Calu3 (cell line): ENCODE measurements at regions of chr1 and their contacts with region 1.

Region 1: DNA sequence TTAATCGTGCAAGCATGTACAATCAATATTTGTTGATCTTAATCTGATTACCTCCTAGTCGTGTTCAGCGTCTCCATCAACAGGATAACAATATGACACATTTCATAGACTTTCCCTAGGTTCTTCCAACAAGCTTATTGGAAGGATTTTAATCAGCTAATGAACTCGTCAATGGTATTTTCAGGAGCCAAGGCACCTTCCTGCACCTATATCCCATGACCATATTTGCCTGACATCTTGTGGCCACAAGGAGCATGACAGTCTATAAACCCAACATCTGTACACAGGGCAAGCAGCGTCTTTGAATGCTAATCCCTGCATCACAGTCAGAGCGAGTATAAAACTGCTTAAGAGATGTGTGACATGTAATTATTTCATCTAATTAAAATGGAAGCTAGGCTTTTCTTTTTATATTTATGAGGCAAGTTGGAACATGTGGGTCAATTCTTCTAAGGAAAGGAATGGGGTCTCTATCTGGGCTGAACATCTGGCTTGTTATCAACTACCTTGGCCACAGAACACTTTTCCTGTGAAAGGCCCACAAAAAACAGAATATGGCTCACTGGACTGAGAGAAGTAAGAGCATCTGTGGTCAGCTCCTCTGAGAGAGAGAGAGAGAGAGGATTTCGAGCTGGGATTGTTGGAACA is 388.8 kb downstream of the NTNG1 start:
- DNase-seq: peak; percentile 9
- H3K4me3 Mint-ChIP-seq: no peak overlapping the region
- H3K27ac Mint-ChIP-seq: no peak overlapping the region
- H3K4me1 Mint-ChIP-seq: no peaks in the 10 kb centered on the region
- H3K27me3 Mint-ChIP-seq: no peaks in the 10 kb centered on the region
- CTCF ChIP-seq: peak; percentile 38

Region 2: DNA sequence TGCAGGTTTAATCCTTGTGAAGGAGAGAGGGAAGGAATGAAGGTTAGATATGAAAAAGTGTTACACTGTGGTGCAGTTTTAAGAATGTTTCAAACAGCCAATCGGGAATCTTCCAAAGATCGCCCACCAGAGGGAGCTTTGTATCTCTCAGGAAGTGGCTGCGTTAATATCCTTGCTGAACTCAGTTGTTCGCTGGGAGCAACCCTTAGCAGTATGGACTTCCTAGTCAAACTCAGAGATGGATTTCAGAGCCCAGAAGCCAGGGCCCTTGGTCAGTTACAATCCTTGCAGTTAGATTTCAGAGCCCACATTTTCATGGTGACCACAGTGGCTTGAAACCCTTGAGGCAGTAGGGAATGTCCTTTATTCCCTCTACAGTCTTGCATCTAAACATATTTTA is 252.6 kb before region 1 on chr1:
- CTCF ChIA-PET with region 1: no interaction called
- intact Hi-C with region 1: loop called (anchors 5 kb)
- DNase-seq: peak; percentile 22
- H3K4me3 Mint-ChIP-seq: no peak overlapping the region
- H3K27ac Mint-ChIP-seq: no peak overlapping the region
- H3K4me1 Mint-ChIP-seq: no peaks in the 10 kb centered on the region
- H3K27me3 Mint-ChIP-seq: no peaks in the 10 kb centered on the region
- CTCF ChIP-seq: no peak

Region 3: GRCh38 chr1:107430540-107431228 is 98.9 kb before region 1 on chr1:
- CTCF ChIA-PET with region 1: interaction called, 9 read pairs
- intact Hi-C with region 1: loop called (anchors 1 kb)
- DNase-seq: peak; percentile 57
- H3K4me3 Mint-ChIP-seq: peak overlapping the region; percentile 62
- H3K27ac Mint-ChIP-seq: peak overlapping the region; percentile 33
- H3K4me1 Mint-ChIP-seq: peaks cover 8% of the 10 kb centered on the region
- H3K27me3 Mint-ChIP-seq: no peaks in the 10 kb centered on the region
- CTCF ChIP-seq: peak; percentile 62